ENCODE measurements at regions of chr13 and their contacts with region 1.

Region 1: DNA sequence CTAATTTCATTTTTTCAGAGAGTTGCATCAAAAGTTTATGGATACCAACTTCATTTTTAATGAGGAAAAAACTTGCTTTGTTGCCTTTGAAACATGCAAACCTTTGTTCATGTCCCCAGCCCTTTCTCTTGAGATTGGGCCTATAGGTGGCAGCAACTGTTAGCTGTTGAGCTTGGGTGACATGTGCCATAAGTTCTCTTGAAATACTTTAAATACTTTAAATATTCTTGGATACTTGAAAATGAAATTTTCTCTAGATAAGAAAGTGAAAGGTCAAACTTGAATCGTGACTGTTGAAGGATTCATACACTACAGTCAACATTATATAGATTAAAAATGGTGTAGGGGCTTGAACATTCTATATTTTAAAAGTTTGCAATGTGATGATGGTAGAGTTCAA is 294.9 kb downstream of the NDFIP2 start:
- DNase-seq: peak; percentile 54 to 66
- H3K4me3 ChIP-seq: no peak overlapping the region
- H3K27ac ChIP-seq: no peak overlapping the region
- H3K4me1 ChIP-seq: peaks cover 18% of the 10 kb centered on the region
- H3K27me3 ChIP-seq: no peaks in the 10 kb centered on the region
- CTCF ChIP-seq: peak; percentile 73

Region 2: DNA sequence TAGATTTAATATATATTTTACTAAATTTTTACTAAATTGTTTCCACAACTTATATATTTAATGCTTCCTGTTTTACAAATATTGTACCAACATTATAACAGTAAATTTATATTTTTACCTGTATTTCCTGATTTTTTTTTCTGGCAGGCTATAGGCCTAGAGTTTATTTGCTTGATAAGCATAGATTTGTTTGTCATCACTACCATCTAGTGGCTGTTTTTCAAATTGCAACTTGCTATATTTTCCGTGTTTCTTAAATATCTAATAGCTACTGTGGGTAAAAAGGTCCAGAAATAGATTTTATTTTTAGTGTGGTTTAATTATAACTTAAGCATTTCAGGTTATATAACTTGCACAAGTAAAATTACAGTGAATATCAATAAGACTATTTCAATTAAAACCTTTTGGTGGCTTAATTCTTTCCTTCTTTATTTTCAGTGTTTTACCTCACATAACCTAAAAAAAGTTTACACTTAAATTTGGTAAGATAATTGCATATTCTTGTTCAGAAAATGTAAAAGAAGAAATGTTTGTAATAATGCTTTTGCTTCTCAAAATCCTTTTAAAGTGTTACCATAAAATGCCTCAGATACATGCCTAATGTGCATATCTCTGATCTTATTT is 234.3 kb before region 1 on chr13:
- CTCF ChIA-PET with region 1: no interaction called
- POLR2A ChIA-PET with region 1: no interaction called
- intact Hi-C with region 1: loop called (anchors 10 kb)
- DNase-seq: peak in 1 of 2 experiments; percentile 46
- H3K4me3 ChIP-seq: no peak overlapping the region
- H3K27ac ChIP-seq: no peak overlapping the region
- H3K4me1 ChIP-seq: no peaks in the 10 kb centered on the region
- H3K27me3 ChIP-seq: no peaks in the 10 kb centered on the region
- CTCF ChIP-seq: peak; percentile 94

Region 3: DNA sequence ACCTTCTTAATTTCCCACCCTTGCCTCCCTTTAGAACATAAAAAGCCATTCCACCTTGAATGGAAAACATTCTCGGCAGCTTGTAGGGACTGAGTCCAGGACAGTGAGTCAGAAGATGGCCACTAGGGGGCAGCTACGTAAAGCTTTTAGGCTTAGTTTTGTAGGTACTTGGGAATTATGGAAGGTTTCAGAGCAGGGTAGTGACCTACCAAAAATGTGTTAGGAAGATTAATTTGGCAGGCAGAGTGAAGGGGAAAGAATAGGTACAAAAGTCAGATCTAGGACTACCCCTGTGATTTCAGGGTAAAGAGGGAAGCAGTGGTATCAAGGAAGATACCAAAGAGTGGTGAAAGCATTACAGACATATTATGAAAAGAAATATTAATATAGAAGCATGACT is 96.5 kb before region 1 on chr13:
- CTCF ChIA-PET with region 1: no interaction called
- POLR2A ChIA-PET with region 1: no interaction called
- intact Hi-C with region 1: loop called (anchors 2 kb)
- DNase-seq: peak; percentile 38 to 45
- H3K4me3 ChIP-seq: no peak overlapping the region
- H3K27ac ChIP-seq: no peak overlapping the region
- H3K4me1 ChIP-seq: peaks cover 16% of the 10 kb centered on the region
- H3K27me3 ChIP-seq: no peaks in the 10 kb centered on the region
- CTCF ChIP-seq: peak; percentile 88

Region 4: GRCh38 chr13:79765331-79765730 is 10.5 kb before region 1 on chr13:
- CTCF ChIA-PET with region 1: no interaction called
- POLR2A ChIA-PET with region 1: no interaction called
- intact Hi-C with region 1: no loop called
- DNase-seq: no peak
- H3K4me3 ChIP-seq: no peak overlapping the region
- H3K27ac ChIP-seq: no peak overlapping the region
- H3K4me1 ChIP-seq: peaks cover 18% of the 10 kb centered on the region
- H3K27me3 ChIP-seq: no peaks in the 10 kb centered on the region
- CTCF ChIP-seq: no peak

Region 5: DNA sequence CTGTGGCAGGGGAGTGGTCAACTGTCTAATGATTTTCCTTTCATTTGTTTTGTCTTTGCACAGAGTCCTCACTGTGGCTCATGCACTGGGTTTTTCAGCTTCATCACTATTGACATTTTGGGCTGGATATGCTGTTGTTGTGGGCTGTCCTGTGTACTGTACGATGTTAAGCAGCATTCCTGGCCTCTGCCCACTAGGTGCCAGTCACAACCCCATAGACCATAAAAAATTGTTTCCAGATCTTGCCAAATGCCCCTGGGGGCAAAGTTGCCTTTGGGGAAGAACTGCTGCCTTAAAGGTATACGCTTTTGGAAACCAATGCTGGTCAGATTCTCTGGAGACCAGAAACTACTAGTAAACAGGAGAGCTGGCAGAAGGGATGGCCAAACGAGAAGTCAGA is 254.7 kb after region 1 on chr13:
- CTCF ChIA-PET with region 1: no interaction called
- POLR2A ChIA-PET with region 1: no interaction called
- intact Hi-C with region 1: loop called (anchors 1 kb)
- DNase-seq: peak; percentile 77 to 80
- H3K4me3 ChIP-seq: no peak overlapping the region
- H3K27ac ChIP-seq: no peak overlapping the region
- H3K4me1 ChIP-seq: peaks cover 10% of the 10 kb centered on the region
- H3K27me3 ChIP-seq: no peaks in the 10 kb centered on the region
- CTCF ChIP-seq: peak; percentile 58

Region 6: GRCh38 chr13:80363890-80364503 is 588.2 kb after region 1 on chr13:
- CTCF ChIA-PET with region 1: no interaction called
- POLR2A ChIA-PET with region 1: no interaction called
- intact Hi-C with region 1: loop called (anchors 2 kb)
- DNase-seq: no peak
- H3K4me3 ChIP-seq: peak overlapping the region; percentile 16; the same call in 1 of the 2 replicates
- H3K27ac ChIP-seq: no peak overlapping the region
- H3K4me1 ChIP-seq: no peaks in the 10 kb centered on the region
- H3K27me3 ChIP-seq: no peaks in the 10 kb centered on the region
- CTCF ChIP-seq: peak; percentile 79

Measured in PC-9 (cell line).